ENCODE measurements at regions of chr7 and their contacts with region 1.

Region 1: DNA sequence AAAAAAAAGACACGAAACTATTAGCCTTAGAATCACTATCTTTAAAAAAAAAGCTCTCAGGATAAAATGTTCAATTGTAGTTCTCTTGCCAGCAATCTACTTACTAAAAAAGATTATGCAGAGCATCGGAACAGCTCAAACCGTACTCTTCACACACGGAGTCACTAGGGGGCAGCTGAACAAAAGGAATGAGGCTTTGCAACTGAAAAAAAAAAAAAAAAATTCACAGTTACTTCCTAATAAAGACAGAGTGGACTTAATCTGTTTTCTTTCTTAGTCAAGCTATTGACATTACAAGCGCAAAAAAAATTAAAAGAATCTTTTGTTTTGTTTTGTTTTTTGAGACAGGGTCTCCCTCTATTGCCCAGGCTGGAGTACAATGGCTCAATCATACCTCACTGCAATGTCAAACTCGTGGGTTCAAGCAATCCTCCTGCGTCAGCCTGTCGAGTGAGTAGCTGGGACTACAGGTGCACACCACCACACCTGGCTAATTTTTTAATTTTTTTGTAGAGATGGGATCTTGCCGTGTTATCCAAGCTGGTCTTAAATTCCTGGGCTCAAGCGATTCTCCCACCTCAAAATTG is 11.5 kb downstream of the PMS2 start:
- DNase-seq: peak; percentile 63 to 73
- ATAC-seq: peak; percentile 83 to 89
- H3K4me3 ChIP-seq: no peak overlapping the region
- H3K27ac ChIP-seq: no peak overlapping the region
- H3K4me1 ChIP-seq: peaks cover 13% of the 10 kb centered on the region
- CTCF ChIP-seq: peak; percentile 75
- EP300 ChIP-seq: no peak
- POLR2A ChIP-seq: no peak
- RAD21 ChIP-seq: peak; percentile 85 to 89

Region 2: GRCh38 chr7:5478568-5479430 is 518.5 kb before region 1 on chr7:
- CTCF ChIA-PET with region 1: no interaction called
- POLR2A ChIA-PET with region 1: no interaction called
- DNase-seq: no peak
- ATAC-seq: peak in 1 of 2 experiments; percentile 9; a peak in 1 of 6 replicates
- H3K4me3 ChIP-seq: no peak overlapping the region
- H3K27ac ChIP-seq: no peak overlapping the region
- H3K4me1 ChIP-seq: no peaks in the 10 kb centered on the region
- CTCF ChIP-seq: no peak
- EP300 ChIP-seq: no peak
- POLR2A ChIP-seq: no peak
- RAD21 ChIP-seq: no peak

Region 3: GRCh38 chr7:6008668-6009611 is 11.6 kb after region 1 on chr7 and contains the starts of genes AIMP2 and PMS2:
- CTCF ChIA-PET with region 1: interaction called, 18 read pairs
- POLR2A ChIA-PET with region 1: interaction called, 24 read pairs
- DNase-seq: peak; percentile 96 to 99
- ATAC-seq: peak; percentile 97 to 99
- H3K4me3 ChIP-seq: peak within 1 kb of the TSS; percentile 71
- H3K27ac ChIP-seq: peak within 1 kb of the TSS; percentile 86 to 95
- H3K4me1 ChIP-seq: peaks cover 32% of the 10 kb centered on the region; the same call in 2 of the 3 replicates
- CTCF ChIP-seq: no peak; the same call in 2 of the 3 replicates
- EP300 ChIP-seq: no peak
- POLR2A ChIP-seq: peak; percentile 77
- RAD21 ChIP-seq: no peak; a peak in 1 of 5 replicates
- polyA plus RNA-seq, gene AIMP2: 119 and 128 TPM in 2 replicates
- polyA plus RNA-seq, gene PMS2: 16.3 and 19.9 TPM in 2 replicates

Region 4: GRCh38 chr7:6447581-6448199 is 450.4 kb after region 1 on chr7 and contains the start of gene DAGLB:
- CTCF ChIA-PET with region 1: interaction called, 3 read pairs
- POLR2A ChIA-PET with region 1: interaction called, 11 read pairs
- DNase-seq: peak; percentile 93 to 94
- ATAC-seq: peak; percentile 63 to 76
- H3K4me3 ChIP-seq: peak within 1 kb of the TSS; percentile 99
- H3K27ac ChIP-seq: peak within 1 kb of the TSS; percentile 92 to 97
- H3K4me1 ChIP-seq: peaks cover 48% of the 10 kb centered on the region
- CTCF ChIP-seq: no peak
- EP300 ChIP-seq: no peak
- POLR2A ChIP-seq: peak; percentile 84
- RAD21 ChIP-seq: no peak
- polyA plus RNA-seq, gene DAGLB: 19.3 and 19.7 TPM in 2 replicates